Colonic mucosa (tissue), 4 donors: ENCODE measurements at regions of chr1 and their contacts with region 1.

Region 1: GRCh38 chr1:92310185-92310597 is 11.3 kb downstream of the RPAP2 start:
- DNase-seq: no peak
- H3K4me3 ChIP-seq: no peak overlapping the region
- H3K27ac ChIP-seq: no peak overlapping the region
- H3K4me1 ChIP-seq: no peaks in the 10 kb centered on the region
- H3K27me3 ChIP-seq: no peaks in the 10 kb centered on the region
- CTCF ChIP-seq: peak; percentile 49

Region 2: DNA sequence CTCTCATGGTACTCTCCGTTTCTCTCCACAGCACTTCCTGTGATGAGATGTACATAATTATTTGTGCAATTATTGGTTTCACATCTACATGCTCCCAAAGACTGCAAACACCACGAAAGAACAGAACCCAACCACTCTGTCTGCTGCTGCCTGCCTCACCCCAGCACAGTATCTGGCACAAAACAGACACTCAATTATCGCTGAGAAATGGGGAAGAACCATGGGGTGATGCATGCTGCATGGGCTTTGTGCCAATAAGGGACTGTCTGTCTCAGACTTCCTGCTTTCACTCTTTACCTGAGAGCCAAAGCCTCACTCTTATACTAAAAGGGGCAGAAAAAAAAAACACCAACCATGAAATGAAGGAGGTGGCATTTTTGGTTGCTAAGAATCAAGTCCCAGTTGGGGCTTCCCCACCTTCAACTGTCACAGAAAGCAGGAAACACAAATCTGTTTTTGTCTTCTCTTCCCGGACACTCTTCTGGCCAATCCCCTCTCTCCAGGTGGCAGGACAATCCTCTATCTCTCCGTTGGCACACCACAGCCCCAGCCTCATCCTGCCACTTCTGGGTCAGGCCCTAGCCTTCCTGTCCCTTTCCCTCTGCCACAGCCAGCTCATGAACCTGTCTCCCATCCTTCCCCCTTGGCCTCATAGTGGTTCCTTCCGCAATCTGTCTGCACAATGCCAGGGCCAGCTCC is 506.2 kb before region 1 on chr1:
- intact Hi-C with region 1: no loop called
- DNase-seq: no peak
- H3K4me3 ChIP-seq: no peak overlapping the region
- H3K27ac ChIP-seq: peak overlapping the region; percentile 18
- H3K4me1 ChIP-seq: peaks cover 10% of the 10 kb centered on the region
- H3K27me3 ChIP-seq: no peaks in the 10 kb centered on the region
- CTCF ChIP-seq: no peak

Region 3: DNA sequence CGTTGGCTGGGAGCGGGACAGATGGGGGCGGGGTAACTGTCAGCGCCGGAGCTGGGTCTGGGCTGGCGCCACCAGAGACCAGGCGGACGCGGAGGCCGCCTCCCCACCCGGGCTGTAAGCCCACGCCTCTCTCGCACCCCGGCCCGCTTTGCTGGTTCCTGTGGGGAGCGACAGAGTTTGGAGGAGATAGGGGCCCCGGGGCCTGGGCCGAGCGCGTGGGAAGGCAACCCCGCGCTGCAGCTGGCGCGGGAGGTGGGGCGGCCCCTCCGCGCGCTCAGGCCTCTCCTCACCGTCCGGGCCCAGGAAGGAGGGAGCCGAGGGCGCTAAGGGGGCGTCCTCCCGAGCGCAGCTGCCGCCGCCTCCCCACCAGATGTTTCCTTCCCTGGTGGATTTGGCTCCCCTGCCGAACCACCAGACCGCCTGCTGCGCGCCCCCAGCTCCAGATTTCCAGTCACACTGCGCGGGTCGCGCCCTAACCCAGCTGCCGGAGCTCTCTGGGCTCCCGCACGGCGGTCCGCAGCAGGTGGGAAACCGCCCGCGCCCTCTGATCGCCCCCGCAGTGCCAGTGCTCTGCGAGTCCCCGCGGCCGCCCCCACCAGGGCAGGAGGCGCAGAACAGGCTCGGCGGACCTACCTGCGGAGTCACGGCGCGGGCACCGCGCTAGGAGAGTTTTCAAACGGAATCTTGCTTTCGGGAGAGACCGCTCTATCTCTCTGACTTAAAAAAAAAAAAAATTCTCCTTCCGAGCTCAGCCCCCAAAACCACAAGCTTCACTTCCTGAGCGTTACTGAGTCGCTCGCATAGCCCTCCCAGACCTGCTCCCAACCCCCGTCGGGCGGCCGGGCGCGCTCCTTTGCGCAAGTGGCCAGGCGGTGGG is 175.4 kb after region 1 on chr1:
- intact Hi-C with region 1: loop called (anchors 10 kb)
- DNase-seq: peak; percentile 70
- H3K4me3 ChIP-seq: peak overlapping the region; percentile 63
- H3K27ac ChIP-seq: peak overlapping the region; percentile 58
- H3K4me1 ChIP-seq: peaks cover 33% of the 10 kb centered on the region
- H3K27me3 ChIP-seq: peaks cover 60% of the 10 kb centered on the region
- CTCF ChIP-seq: peak; percentile 21